CD4-positive, alpha-beta T cell (primary cell): ENCODE measurements at regions of chr19 and their contacts with region 1.

Region 1: GRCh38 chr19:39445265-39446111 is at the start of gene SUPT5H:
- DNase-seq: peak; percentile 94 to 100 (median 97)
- ATAC-seq: peak; percentile 93
- H3K4me3 ChIP-seq: peak within 1 kb of the TSS; percentile 99
- H3K4me3 Mint-ChIP-seq: peak within 1 kb of the TSS; percentile 98
- H3K27ac ChIP-seq: peak within 1 kb of the TSS; percentile 89 to 94
- H3K27ac Mint-ChIP-seq: peak within 1 kb of the TSS; percentile 91
- H3K4me1 ChIP-seq: peaks cover 54% of the 10 kb centered on the region
- H3K4me1 Mint-ChIP-seq: peaks cover 56% of the 10 kb centered on the region
- H3K27me3 ChIP-seq: no peaks in the 10 kb centered on the region
- H3K27me3 Mint-ChIP-seq: no peaks in the 10 kb centered on the region
- CTCF ChIP-seq: no peak
- total RNA-seq, gene SUPT5H: 322 to 333 TPM

Region 2: DNA sequence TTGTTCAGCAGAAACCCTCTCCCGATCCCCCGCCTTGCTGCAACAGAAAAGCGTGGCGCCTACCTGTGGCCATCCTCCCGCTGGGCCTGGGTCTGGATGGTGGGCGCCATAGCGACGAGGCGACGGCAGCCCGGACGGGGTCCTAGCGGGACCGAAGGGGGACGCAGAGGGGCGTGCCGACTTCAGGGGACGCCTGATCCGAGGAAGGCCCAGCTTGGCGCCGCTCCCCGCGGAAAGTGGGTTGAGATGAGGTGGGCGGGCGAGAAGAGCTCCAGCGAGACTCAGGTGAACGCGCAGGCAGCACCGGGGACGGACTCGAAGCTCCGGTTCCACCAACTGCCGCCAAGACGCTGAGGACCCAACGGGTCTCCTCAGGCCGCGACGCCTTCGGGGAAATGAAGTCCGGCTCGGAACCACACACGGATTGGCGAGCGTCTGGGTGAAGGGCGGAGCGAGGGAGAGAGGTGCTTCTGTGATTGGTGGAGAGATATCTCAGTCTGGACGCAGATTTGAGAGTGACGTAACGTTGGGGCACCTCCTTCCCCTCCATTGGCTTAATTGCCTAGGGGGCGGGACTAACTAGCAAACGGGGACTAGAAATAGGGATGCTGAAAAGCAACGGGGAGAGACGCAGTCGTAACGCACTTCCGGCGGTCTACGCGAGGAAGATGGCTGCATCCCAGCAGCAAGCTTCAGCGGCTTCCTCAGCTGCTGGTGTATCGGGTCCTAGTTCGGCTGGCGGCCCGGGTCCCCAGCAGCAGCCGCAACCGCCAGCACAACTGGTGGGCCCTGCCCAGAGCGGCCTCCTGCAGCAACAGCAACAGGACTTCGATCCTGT is 54.5 kb before region 1 on chr19 and contains the starts of genes MED29 and PAF1:
- CTCF ChIA-PET with region 1: interaction called, 3 read pairs
- POLR2A ChIA-PET with region 1: interaction called, 33 read pairs
- intact Hi-C with region 1: loop called (anchors 1 to 2 kb)
- DNase-seq: peak; percentile 91 to 100 (median 94)
- ATAC-seq: peak; percentile 90
- H3K4me3 ChIP-seq: peak within 1 kb of the TSS; percentile 91
- H3K4me3 Mint-ChIP-seq: peak within 1 kb of the TSS; percentile 90
- H3K27ac ChIP-seq: peak within 1 kb of the TSS; percentile 98 to 100
- H3K27ac Mint-ChIP-seq: peak within 1 kb of the TSS; percentile 96
- H3K4me1 ChIP-seq: peaks cover 44% of the 10 kb centered on the region
- H3K4me1 Mint-ChIP-seq: peaks cover 33% of the 10 kb centered on the region
- H3K27me3 ChIP-seq: no peaks in the 10 kb centered on the region
- H3K27me3 Mint-ChIP-seq: no peaks in the 10 kb centered on the region
- CTCF ChIP-seq: no peak
- total RNA-seq, gene MED29: 45.0 to 46.1 TPM
- total RNA-seq, gene PAF1: 99.6 to 101 TPM

Region 3: DNA sequence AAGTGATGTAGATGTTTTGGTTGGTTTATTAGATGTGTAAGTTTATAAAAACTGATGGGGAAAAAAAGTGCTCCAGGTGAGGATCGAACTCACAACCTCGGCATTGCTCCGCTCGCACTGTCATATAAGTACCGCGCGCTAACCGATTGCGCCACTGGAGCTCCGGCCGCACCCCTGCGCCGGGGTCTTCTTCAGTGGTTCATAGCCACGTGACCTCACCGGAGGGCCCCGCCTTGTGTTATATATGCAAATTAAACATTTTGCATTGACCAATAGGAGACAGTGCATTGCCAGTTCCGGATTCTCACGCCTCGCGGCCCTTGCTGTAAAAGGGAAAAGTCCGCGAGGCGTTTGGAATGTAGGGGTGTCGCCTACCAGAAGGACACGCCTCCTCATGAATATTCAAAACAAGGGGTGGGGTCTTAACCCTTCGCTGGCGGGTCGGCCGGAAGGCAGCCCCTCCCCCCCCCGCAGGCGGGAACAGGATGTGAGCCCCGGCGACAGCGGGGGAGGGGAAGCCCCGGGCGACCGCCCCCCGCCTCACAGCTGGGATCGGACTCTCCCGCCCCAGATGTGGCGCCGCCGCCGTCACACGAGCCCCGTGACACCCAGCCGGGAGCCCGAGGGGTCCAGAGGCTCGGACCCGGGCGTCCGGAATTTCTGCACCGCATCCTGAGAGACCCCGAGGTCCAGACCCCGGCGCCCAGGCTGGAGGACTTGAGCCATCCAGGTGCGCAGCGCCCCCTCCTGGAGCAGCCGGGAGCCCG is 33.2 kb before region 1 on chr19 and contains the start of gene PLEKHG2:
- CTCF ChIA-PET with region 1: interaction called, 8 read pairs
- POLR2A ChIA-PET with region 1: interaction called, 17 read pairs
- intact Hi-C with region 1: loop called in 1 of 2 experiments (anchors 1 kb)
- DNase-seq: peak; percentile 94 to 100 (median 97)
- ATAC-seq: peak; percentile 61
- H3K4me3 ChIP-seq: peak within 1 kb of the TSS; percentile 100
- H3K4me3 Mint-ChIP-seq: peak within 1 kb of the TSS; percentile 95
- H3K27ac ChIP-seq: peak within 1 kb of the TSS; percentile 100
- H3K27ac Mint-ChIP-seq: peak within 1 kb of the TSS; percentile 98
- H3K4me1 ChIP-seq: peaks cover 72% of the 10 kb centered on the region
- H3K4me1 Mint-ChIP-seq: peaks cover 41% of the 10 kb centered on the region
- H3K27me3 ChIP-seq: no peaks in the 10 kb centered on the region
- H3K27me3 Mint-ChIP-seq: peaks cover 12% of the 10 kb centered on the region
- CTCF ChIP-seq: peak; percentile 80
- total RNA-seq, gene PLEKHG2: 80.6 to 81.4 TPM

Region 4: GRCh38 chr19:39502640-39503417 is 57.3 kb after region 1 on chr19:
- CTCF ChIA-PET with region 1: interaction called, 3 read pairs
- POLR2A ChIA-PET with region 1: interaction called, 3 read pairs
- intact Hi-C with region 1: loop called (anchors 2 kb)
- DNase-seq: peak; percentile 56 to 94 (median 72)
- ATAC-seq: peak; percentile 79
- H3K4me3 ChIP-seq: no peak overlapping the region
- H3K4me3 Mint-ChIP-seq: no peak overlapping the region
- H3K27ac ChIP-seq: no peak overlapping the region
- H3K27ac Mint-ChIP-seq: no peak overlapping the region
- H3K4me1 ChIP-seq: peaks cover 40% of the 10 kb centered on the region
- H3K4me1 Mint-ChIP-seq: peaks cover 48% of the 10 kb centered on the region
- H3K27me3 ChIP-seq: peaks cover 63 to 77% of the 10 kb centered on the region in 2 experiments
- H3K27me3 Mint-ChIP-seq: peaks cover 82% of the 10 kb centered on the region
- CTCF ChIP-seq: peak; percentile 68

Region 5: DNA sequence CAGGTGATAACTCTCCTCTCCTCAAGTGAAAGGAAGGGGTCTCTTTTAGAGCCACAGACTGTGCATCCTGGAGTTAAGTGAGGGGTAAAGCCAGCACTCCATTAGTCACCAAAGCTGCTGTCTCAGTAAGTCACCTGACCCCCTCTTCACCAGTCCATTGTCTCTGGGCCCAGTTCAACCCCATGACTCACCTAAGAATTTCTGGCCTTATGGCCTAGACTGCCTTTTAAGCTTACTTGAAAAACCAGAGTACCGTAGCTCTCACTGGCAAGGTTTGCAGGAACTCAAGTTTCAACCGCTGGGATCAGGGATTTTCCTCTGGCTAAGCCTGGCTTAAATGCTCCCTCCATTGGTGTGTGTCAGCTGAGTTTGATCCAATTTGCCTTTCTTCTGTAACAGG is 117.9 kb after region 1 on chr19:
- CTCF ChIA-PET with region 1: no interaction called
- POLR2A ChIA-PET with region 1: no interaction called
- intact Hi-C with region 1: no loop called
- DNase-seq: no peak
- ATAC-seq: no peak
- H3K4me3 ChIP-seq: no peak overlapping the region
- H3K4me3 Mint-ChIP-seq: no peak overlapping the region
- H3K27ac ChIP-seq: no peak overlapping the region
- H3K27ac Mint-ChIP-seq: no peak overlapping the region
- H3K4me1 ChIP-seq: peaks cover 10% of the 10 kb centered on the region
- H3K4me1 Mint-ChIP-seq: peaks cover 6% of the 10 kb centered on the region
- H3K27me3 ChIP-seq: no peaks in the 10 kb centered on the region
- H3K27me3 Mint-ChIP-seq: no peaks in the 10 kb centered on the region
- CTCF ChIP-seq: no peak

Region 6: GRCh38 chr19:39765091-39766076 is 319.9 kb after region 1 on chr19:
- CTCF ChIA-PET with region 1: no interaction called
- POLR2A ChIA-PET with region 1: no interaction called
- intact Hi-C with region 1: loop called in 1 of 2 experiments (anchors 5 kb)
- DNase-seq: peak in 12 of 14 experiments; percentile 6 to 71 (median 26)
- ATAC-seq: no peak
- H3K4me3 ChIP-seq: no peak overlapping the region
- H3K4me3 Mint-ChIP-seq: no peak overlapping the region
- H3K27ac ChIP-seq: no peak overlapping the region
- H3K27ac Mint-ChIP-seq: no peak overlapping the region
- H3K4me1 ChIP-seq: peaks cover 4% of the 10 kb centered on the region
- H3K4me1 Mint-ChIP-seq: no peaks in the 10 kb centered on the region
- H3K27me3 ChIP-seq: peaks cover 0 to 3% of the 10 kb centered on the region in 2 experiments
- H3K27me3 Mint-ChIP-seq: peaks cover 12% of the 10 kb centered on the region
- CTCF ChIP-seq: peak; percentile 81